ENCODE measurements at regions of chr2 and their contacts with region 1.

Region 1: DNA sequence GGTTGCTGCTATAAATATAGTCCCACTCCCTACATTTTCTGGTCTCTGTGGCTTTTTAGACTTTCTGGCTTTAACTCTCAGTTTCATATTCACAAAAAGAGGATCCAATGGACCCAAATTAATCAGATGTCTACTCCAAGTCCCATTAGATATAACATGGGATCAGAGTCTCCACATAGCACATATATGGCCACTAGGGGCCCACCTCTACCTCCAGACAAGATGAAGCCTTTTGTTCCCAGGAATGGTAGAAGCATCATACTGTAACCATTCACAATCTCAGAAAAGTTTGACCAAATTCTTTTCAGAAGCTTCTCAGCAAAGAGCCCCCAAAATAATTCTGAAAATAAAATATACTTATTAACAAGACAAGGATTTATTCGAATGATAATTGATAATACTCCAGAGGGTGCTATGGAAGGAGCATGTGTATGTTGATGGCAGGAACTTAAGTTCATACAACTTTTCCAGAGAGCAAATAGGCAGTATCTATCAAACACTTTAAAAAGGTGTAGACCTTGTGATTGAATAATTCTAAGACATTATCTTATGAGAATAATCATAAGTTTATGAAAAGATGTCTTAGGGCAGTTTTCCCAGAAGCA is 382.3 kb upstream of the CRIM1 start:
- DNase-seq: peak in 2 of 9 experiments; percentile 35 to 56
- ATAC-seq: no peak
- H3K4me3 ChIP-seq: no peak overlapping the region
- H3K4me3 Mint-ChIP-seq: no peak overlapping the region
- H3K27ac ChIP-seq: no peak overlapping the region
- H3K27ac Mint-ChIP-seq: no peak overlapping the region
- H3K4me1 ChIP-seq: peaks cover 9% of the 10 kb centered on the region
- H3K4me1 Mint-ChIP-seq: peaks cover 4% of the 10 kb centered on the region
- H3K27me3 ChIP-seq: no peaks in the 10 kb centered on the region
- H3K27me3 Mint-ChIP-seq: no peaks in the 10 kb centered on the region
- CTCF ChIP-seq: peak; percentile 30

Region 2: GRCh38 chr2:35063836-35064235 is 909.4 kb before region 1 on chr2:
- CTCF ChIA-PET with region 1: no interaction called
- POLR2A ChIA-PET with region 1: no interaction called
- intact Hi-C with region 1: no loop called
- DNase-seq: no peak
- ATAC-seq: no peak
- H3K4me3 ChIP-seq: no peak overlapping the region
- H3K4me3 Mint-ChIP-seq: no peak overlapping the region
- H3K27ac ChIP-seq: no peak overlapping the region
- H3K27ac Mint-ChIP-seq: no peak overlapping the region
- H3K4me1 ChIP-seq: no peaks in the 10 kb centered on the region
- H3K4me1 Mint-ChIP-seq: no peaks in the 10 kb centered on the region
- H3K27me3 ChIP-seq: no peaks in the 10 kb centered on the region
- H3K27me3 Mint-ChIP-seq: no peaks in the 10 kb centered on the region
- CTCF ChIP-seq: no peak

Region 3: GRCh38 chr2:35946478-35946877 is 26.8 kb before region 1 on chr2:
- CTCF ChIA-PET with region 1: no interaction called
- POLR2A ChIA-PET with region 1: no interaction called
- intact Hi-C with region 1: no loop called
- DNase-seq: no peak
- ATAC-seq: no peak
- H3K4me3 ChIP-seq: no peak overlapping the region
- H3K4me3 Mint-ChIP-seq: no peak overlapping the region
- H3K27ac ChIP-seq: no peak overlapping the region
- H3K27ac Mint-ChIP-seq: no peak overlapping the region
- H3K4me1 ChIP-seq: no peaks in the 10 kb centered on the region
- H3K4me1 Mint-ChIP-seq: no peaks in the 10 kb centered on the region
- H3K27me3 ChIP-seq: no peaks in the 10 kb centered on the region
- H3K27me3 Mint-ChIP-seq: peaks cover 5% of the 10 kb centered on the region
- CTCF ChIP-seq: no peak

Region 4: DNA sequence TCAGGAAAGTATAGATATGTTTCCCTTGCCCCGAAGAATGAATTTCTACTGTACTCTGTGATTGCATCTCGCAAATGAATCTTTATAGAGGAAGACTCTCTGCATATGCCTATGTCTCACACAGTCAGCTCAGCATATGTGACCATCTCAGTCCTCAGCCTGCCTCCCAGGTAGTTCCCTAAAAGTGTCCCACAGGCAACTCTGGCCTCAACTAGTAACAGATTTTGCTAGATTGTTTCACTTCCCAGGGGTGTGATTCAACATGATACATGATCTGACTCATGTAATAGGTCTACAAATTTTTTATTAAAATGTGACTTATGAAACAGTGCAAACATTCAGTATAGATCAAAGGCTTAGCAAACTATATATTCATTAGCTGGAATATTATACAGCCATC is 85.7 kb after region 1 on chr2:
- CTCF ChIA-PET with region 1: no interaction called
- POLR2A ChIA-PET with region 1: no interaction called
- intact Hi-C with region 1: no loop called
- DNase-seq: no peak
- ATAC-seq: no peak
- H3K4me3 ChIP-seq: no peak overlapping the region
- H3K4me3 Mint-ChIP-seq: no peak overlapping the region
- H3K27ac ChIP-seq: no peak overlapping the region
- H3K27ac Mint-ChIP-seq: no peak overlapping the region
- H3K4me1 ChIP-seq: no peaks in the 10 kb centered on the region
- H3K4me1 Mint-ChIP-seq: peaks cover 7% of the 10 kb centered on the region
- H3K27me3 ChIP-seq: no peaks in the 10 kb centered on the region
- H3K27me3 Mint-ChIP-seq: peaks cover 8% of the 10 kb centered on the region
- CTCF ChIP-seq: no peak

Region 5: DNA sequence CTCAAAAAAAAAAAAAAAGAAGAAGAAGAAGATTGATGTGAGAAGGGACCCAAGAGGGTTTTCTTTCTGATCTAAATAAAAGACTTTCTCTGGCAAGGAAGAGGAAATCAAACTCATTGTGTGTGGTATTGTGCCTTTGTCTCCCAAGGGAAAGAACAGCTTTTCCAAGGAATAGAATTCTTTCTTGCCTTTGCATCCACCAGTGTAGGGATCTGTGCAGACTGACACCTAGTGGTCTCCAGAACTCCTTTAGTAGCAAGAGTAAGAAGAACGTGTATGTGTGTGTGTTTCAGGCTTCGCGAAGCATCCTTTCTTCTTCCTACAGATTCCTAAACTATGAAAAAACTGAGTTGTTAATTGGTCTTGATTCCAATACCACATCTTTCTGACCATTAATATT is 348.9 kb after region 1 on chr2:
- CTCF ChIA-PET with region 1: no interaction called
- POLR2A ChIA-PET with region 1: no interaction called
- intact Hi-C with region 1: loop called in 1 of 2 experiments (anchors 2 kb)
- DNase-seq: peak in 2 of 9 experiments; percentile 10 to 29
- ATAC-seq: no peak
- H3K4me3 ChIP-seq: no peak overlapping the region
- H3K4me3 Mint-ChIP-seq: no peak overlapping the region
- H3K27ac ChIP-seq: no peak overlapping the region
- H3K27ac Mint-ChIP-seq: no peak overlapping the region
- H3K4me1 ChIP-seq: no peaks in the 10 kb centered on the region
- H3K4me1 Mint-ChIP-seq: no peaks in the 10 kb centered on the region
- H3K27me3 ChIP-seq: no peaks in the 10 kb centered on the region
- H3K27me3 Mint-ChIP-seq: peaks cover 4% of the 10 kb centered on the region
- CTCF ChIP-seq: no peak

Region 6: GRCh38 chr2:36507408-36507812 is 534.2 kb after region 1 on chr2:
- CTCF ChIA-PET with region 1: no interaction called
- POLR2A ChIA-PET with region 1: no interaction called
- intact Hi-C with region 1: loop called in 1 of 2 experiments (anchors 2 kb)
- DNase-seq: peak in 6 of 9 experiments; percentile 6 to 51 (median 13)
- ATAC-seq: no peak
- H3K4me3 ChIP-seq: no peak overlapping the region
- H3K4me3 Mint-ChIP-seq: no peak overlapping the region
- H3K27ac ChIP-seq: no peak overlapping the region
- H3K27ac Mint-ChIP-seq: no peak overlapping the region
- H3K4me1 ChIP-seq: no peaks in the 10 kb centered on the region
- H3K4me1 Mint-ChIP-seq: no peaks in the 10 kb centered on the region
- H3K27me3 ChIP-seq: no peaks in the 10 kb centered on the region
- H3K27me3 Mint-ChIP-seq: no peaks in the 10 kb centered on the region
- CTCF ChIP-seq: peak; percentile 39

Region 7: DNA sequence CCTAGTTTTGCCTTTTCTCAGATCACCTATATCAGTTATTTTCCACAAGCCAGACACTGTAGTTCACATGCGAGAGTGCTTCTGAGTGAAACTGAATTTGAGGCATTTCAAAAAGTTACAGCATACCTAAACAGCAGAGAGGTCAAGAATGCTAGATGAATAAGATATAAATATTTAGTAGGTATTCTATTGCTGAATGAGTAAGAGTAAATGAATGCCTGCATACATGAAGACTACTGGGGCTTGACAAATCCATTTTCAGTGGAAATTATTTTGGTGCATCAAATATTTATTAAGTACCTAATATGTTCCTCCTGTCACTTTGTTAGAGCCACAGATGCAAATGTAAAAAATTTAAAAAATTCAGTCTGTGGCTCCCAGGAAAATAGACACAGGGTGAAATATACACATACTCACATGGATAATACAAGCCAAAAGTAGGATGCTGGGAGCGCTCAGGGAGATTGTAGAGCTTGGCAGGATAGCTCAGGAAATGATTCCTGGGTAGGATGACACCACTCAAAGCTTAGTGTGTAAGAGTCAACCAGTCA is 1725.8 kb after region 1 on chr2:
- CTCF ChIA-PET with region 1: no interaction called
- POLR2A ChIA-PET with region 1: no interaction called
- intact Hi-C with region 1: no loop called
- DNase-seq: no peak
- ATAC-seq: no peak
- H3K4me3 ChIP-seq: no peak overlapping the region
- H3K4me3 Mint-ChIP-seq: no peak overlapping the region
- H3K27ac ChIP-seq: no peak overlapping the region
- H3K27ac Mint-ChIP-seq: no peak overlapping the region
- H3K4me1 ChIP-seq: no peaks in the 10 kb centered on the region
- H3K4me1 Mint-ChIP-seq: no peaks in the 10 kb centered on the region
- H3K27me3 ChIP-seq: no peaks in the 10 kb centered on the region
- H3K27me3 Mint-ChIP-seq: no peaks in the 10 kb centered on the region
- CTCF ChIP-seq: no peak